Activated naive CD4-positive, alpha-beta T cell treated with anti-CD3 and anti-CD28 coated beads for 36 hours (primary cell): ENCODE measurements at regions of chr19 and their contacts with region 1.

Region 1: GRCh38 chr19:11035441-11036377 is 53.6 kb upstream of the LDLR start:
- DNase-seq: peak; percentile 95
- H3K4me3 Mint-ChIP-seq: no peak overlapping the region
- H3K27ac Mint-ChIP-seq: peak overlapping the region; percentile 56
- H3K4me1 Mint-ChIP-seq: peaks cover 8% of the 10 kb centered on the region
- H3K27me3 Mint-ChIP-seq: no peaks in the 10 kb centered on the region

Region 2: DNA sequence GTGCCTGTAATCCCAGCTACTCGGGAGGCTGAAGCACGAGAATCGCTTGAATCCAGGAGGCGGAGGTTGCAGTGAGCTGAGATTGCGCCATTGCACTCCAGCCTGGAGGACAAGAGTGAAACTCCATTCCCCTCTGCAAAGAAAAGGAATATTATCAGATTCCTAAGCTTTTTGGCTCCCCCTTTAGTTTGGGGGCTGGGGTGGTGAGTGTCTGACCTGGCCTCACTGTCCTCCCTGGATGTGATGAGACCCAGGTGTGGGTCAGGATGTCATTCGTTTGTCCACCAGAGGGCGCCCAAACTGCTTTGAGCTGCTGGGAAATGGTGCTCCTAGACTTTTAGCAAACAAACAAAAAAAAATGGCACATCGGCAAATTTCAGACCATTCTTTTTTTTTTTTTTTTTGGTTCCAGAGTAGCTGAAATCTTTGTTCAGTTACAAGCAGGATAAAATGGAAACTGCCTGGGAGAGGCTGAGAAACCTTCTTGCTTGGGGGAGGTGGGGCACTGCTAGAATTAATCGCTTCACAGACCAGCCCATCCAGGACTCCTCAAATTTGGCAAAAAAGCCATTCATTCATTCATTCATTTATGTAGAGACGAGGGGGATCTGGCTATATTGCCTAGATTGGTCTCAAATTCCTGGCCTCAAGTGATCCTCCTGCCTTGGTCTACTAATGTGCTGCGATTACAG is 90.4 kb after region 1 on chr19:
- CTCF ChIA-PET with region 1: interaction called, 24 read pairs
- intact Hi-C with region 1: loop called (anchors 1 kb)
- DNase-seq: peak; percentile 88
- H3K4me3 Mint-ChIP-seq: no peak overlapping the region
- H3K27ac Mint-ChIP-seq: peak overlapping the region; percentile 18
- H3K4me1 Mint-ChIP-seq: no peaks in the 10 kb centered on the region
- H3K27me3 Mint-ChIP-seq: no peaks in the 10 kb centered on the region

Region 3: GRCh38 chr19:11435058-11435832 is 399.5 kb after region 1 on chr19 and contains the starts of genes ODAD3 and PRKCSH:
- CTCF ChIA-PET with region 1: no interaction called
- intact Hi-C with region 1: no loop called
- DNase-seq: peak; percentile 99
- H3K4me3 Mint-ChIP-seq: peak within 1 kb of the TSS; percentile 100
- H3K27ac Mint-ChIP-seq: peak within 1 kb of the TSS; percentile 93
- H3K4me1 Mint-ChIP-seq: peaks cover 22% of the 10 kb centered on the region
- H3K27me3 Mint-ChIP-seq: no peaks in the 10 kb centered on the region
- total RNA-seq, gene ODAD3: 0.15 to 0.19 TPM
- total RNA-seq, gene PRKCSH: 234 to 237 TPM